HCT116 (cell line): ENCODE measurements at regions of chr7 and their contacts with region 1.

Region 1: GRCh38 chr7:25894902-25895791 is 256.9 kb upstream of the NFE2L3 start:
- DNase-seq: peak; percentile 18
- ATAC-seq: peak; percentile 74
- H3K4me3 ChIP-seq: peak overlapping the region; percentile 18 to 24
- H3K27ac ChIP-seq: peak overlapping the region; percentile 26; the same call in 1 of the 2 replicates
- H3K4me1 ChIP-seq: peaks cover 6 to 28% of the 10 kb centered on the region in 2 experiments; a peak in 3 of 4 replicates
- H3K27me3 ChIP-seq: no peaks in the 10 kb centered on the region
- CTCF ChIP-seq: peak; percentile 49 to 86 (median 78); a peak in 5 of 6 replicates
- POLR2A ChIP-seq: no peak
- RAD21 ChIP-seq: peak; percentile 40; the same call in 1 of the 2 replicates

Region 2: GRCh38 chr7:25908154-25908949 is 13.2 kb after region 1 on chr7:
- CTCF ChIA-PET with region 1: interaction called, 28 read pairs
- POLR2A ChIA-PET with region 1: no interaction called
- RAD21 ChIA-PET with region 1: no interaction called
- intact Hi-C with region 1: no loop called
- DNase-seq: no peak
- ATAC-seq: no peak
- H3K4me3 ChIP-seq: no peak overlapping the region
- H3K27ac ChIP-seq: no peak overlapping the region
- H3K4me1 ChIP-seq: no peaks in the 10 kb centered on the region
- H3K27me3 ChIP-seq: no peaks in the 10 kb centered on the region
- CTCF ChIP-seq: no peak
- POLR2A ChIP-seq: no peak
- RAD21 ChIP-seq: no peak

Region 3: DNA sequence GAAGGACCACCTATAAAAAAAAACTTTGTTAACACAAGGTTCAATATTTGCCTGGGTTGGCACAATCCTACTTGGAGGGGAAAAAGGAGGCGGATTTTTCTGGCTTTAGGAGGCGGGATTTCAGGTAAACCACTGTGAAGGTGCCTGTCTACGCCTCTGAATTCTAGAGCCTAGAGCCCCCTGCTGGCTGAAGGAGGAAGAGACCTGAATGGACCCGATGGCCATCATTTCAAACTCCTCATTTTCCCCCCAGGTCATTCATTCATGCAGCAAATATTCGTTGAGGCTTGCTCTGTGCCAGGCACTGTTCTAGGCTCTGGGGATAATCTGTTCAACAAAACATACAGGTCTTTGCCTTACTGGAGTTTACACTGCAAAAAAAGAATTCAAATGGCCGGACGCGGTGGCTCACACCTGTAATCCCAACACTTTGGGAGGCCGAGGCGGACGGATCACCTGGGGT is 166.6 kb after region 1 on chr7:
- CTCF ChIA-PET with region 1: no interaction called
- POLR2A ChIA-PET with region 1: no interaction called
- RAD21 ChIA-PET with region 1: interaction called in 1 of 2 experiments, 4 read pairs
- intact Hi-C with region 1: loop called (anchors 1 kb)
- DNase-seq: peak; percentile 80
- ATAC-seq: peak; percentile 98
- H3K4me3 ChIP-seq: no peak overlapping the region
- H3K27ac ChIP-seq: no peak overlapping the region
- H3K4me1 ChIP-seq: peaks cover 0 to 3% of the 10 kb centered on the region in 2 experiments; a peak in 1 of 4 replicates
- H3K27me3 ChIP-seq: no peaks in the 10 kb centered on the region
- CTCF ChIP-seq: peak; percentile 73 to 93 (median 84)
- POLR2A ChIP-seq: no peak
- RAD21 ChIP-seq: peak; percentile 82

Region 4: DNA sequence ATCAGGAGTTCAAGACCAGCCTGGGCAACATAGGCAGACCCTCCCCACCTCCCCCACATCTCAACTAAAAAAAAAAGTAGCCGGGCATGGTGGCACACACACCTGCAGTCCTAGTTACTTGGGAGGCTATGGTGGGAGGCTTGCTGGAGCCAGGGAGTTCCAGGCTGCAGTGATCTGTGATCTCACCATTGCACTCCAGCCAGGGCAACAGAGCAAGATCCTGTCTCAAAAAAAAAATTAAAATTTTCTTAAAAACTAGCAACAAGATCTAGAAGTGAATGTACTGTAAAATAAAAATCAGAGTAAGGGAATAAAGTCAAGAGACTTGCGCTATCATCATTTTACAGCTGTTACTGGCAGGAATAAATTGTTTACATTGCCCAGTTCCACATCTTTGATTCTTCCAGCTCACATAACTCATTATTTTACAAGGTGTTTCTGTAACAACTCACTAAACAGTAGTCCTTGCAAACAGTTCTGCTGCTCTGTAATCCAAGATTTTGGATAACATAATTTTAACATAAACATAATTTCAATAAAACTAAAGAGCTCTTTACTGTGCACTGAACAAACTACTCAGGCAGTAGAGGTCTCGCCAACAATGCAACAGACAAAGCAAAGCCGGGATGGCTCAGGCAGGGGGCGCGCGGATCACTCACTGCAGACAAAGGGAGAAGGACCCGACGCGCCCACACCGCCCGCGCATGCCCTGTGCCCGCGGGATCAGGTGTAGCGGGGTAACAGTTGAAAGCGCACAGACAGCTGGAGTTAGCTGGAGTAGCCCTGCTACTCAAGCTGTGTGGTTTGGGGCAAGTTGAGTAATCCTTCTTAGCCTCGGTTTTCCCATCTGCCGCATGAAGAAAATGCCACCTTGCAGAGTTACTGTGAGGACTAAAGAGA is 183.5 kb after region 1 on chr7:
- CTCF ChIA-PET with region 1: interaction called, 14 read pairs
- POLR2A ChIA-PET with region 1: no interaction called
- RAD21 ChIA-PET with region 1: interaction called in 1 of 2 experiments, 3 read pairs
- intact Hi-C with region 1: no loop called
- DNase-seq: peak; percentile 41
- ATAC-seq: peak; percentile 100
- H3K4me3 ChIP-seq: peak overlapping the region; percentile 16 to 43
- H3K27ac ChIP-seq: no peak overlapping the region
- H3K4me1 ChIP-seq: peaks cover 2 to 19% of the 10 kb centered on the region in 2 experiments; a peak in 3 of 4 replicates
- H3K27me3 ChIP-seq: no peaks in the 10 kb centered on the region
- CTCF ChIP-seq: peak; percentile 58 to 68 (median 65)
- POLR2A ChIP-seq: no peak
- RAD21 ChIP-seq: peak; percentile 76

Region 5: DNA sequence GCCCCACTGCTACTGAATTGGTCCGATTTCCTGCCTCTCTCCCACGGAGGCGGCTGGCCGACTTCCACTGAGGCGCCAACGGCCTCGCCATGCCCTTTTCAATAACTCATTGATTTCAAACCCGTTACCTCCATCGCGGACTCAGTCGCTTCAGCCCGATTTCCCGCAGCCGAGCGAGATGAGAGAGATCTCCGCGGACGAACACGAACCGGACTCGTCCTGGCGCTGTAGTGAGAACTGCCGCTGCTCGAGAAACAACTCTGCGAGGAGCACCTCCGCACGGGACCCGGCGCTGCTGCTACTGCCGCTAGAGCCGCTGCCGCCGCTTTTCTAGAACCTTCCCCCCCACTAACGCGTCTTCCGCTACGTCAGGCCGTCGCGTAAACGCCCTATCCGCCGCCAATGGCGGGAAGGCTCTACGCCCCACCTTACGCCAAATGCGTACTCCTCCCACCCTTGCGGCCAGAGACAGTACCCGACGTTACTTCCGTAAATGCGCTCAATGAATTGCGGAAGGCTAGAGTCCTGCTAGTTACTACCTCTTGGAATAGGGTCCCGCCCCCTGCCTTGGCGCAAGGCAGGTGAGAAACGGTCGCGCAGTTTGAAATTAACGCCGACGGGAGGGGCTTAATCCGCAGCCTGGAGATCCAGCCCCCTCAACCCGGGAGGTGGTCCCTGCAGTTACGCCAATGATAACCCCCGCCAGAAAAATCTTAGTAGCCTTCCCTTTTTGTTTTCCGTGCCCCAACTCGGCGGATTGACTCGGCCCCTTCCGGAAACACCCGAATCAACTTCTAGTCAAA is 305.5 kb after region 1 on chr7 and contains the start of gene HNRNPA2B1:
- CTCF ChIA-PET with region 1: interaction called, 6 read pairs
- POLR2A ChIA-PET with region 1: interaction called, 4 read pairs
- RAD21 ChIA-PET with region 1: interaction called in 1 of 2 experiments, 3 read pairs
- intact Hi-C with region 1: loop called (anchors 2 kb)
- DNase-seq: peak; percentile 95
- ATAC-seq: peak; percentile 78
- H3K4me3 ChIP-seq: peak within 1 kb of the TSS; percentile 68 to 93
- H3K27ac ChIP-seq: peak within 1 kb of the TSS; percentile 97
- H3K4me1 ChIP-seq: peaks cover 13 to 39% of the 10 kb centered on the region in 2 experiments
- H3K27me3 ChIP-seq: no peaks in the 10 kb centered on the region
- CTCF ChIP-seq: no peak
- POLR2A ChIP-seq: peak; percentile 99
- RAD21 ChIP-seq: no peak
- total RNA-seq, gene HNRNPA2B1: 870 TPM

Region 6: GRCh38 chr7:26284995-26285632 is 390.0 kb after region 1 on chr7:
- CTCF ChIA-PET with region 1: interaction called, 11 read pairs
- POLR2A ChIA-PET with region 1: no interaction called
- RAD21 ChIA-PET with region 1: no interaction called
- intact Hi-C with region 1: loop called (anchors 2 kb)
- DNase-seq: peak; percentile 61
- ATAC-seq: peak; percentile 100
- H3K4me3 ChIP-seq: no peak overlapping the region
- H3K27ac ChIP-seq: no peak overlapping the region
- H3K4me1 ChIP-seq: no peaks in the 10 kb centered on the region
- H3K27me3 ChIP-seq: no peaks in the 10 kb centered on the region
- CTCF ChIP-seq: peak; percentile 45 to 61 (median 53); a peak in 5 of 6 replicates
- POLR2A ChIP-seq: no peak
- RAD21 ChIP-seq: peak; percentile 76

Region 7: GRCh38 chr7:26500749-26501352 is 605.7 kb after region 1 on chr7:
- CTCF ChIA-PET with region 1: no interaction called
- POLR2A ChIA-PET with region 1: no interaction called
- RAD21 ChIA-PET with region 1: no interaction called
- intact Hi-C with region 1: loop called (anchors 10 kb)
- DNase-seq: peak; percentile 15
- ATAC-seq: peak; percentile 78
- H3K4me3 ChIP-seq: no peak overlapping the region
- H3K27ac ChIP-seq: no peak overlapping the region
- H3K4me1 ChIP-seq: no peaks in the 10 kb centered on the region
- H3K27me3 ChIP-seq: no peaks in the 10 kb centered on the region
- CTCF ChIP-seq: peak; percentile 58 to 67 (median 67); a peak in 5 of 6 replicates
- POLR2A ChIP-seq: no peak
- RAD21 ChIP-seq: peak; percentile 67